T-cell (primary cell): ENCODE measurements at regions of chr6 and their contacts with region 1.

Region 1: DNA sequence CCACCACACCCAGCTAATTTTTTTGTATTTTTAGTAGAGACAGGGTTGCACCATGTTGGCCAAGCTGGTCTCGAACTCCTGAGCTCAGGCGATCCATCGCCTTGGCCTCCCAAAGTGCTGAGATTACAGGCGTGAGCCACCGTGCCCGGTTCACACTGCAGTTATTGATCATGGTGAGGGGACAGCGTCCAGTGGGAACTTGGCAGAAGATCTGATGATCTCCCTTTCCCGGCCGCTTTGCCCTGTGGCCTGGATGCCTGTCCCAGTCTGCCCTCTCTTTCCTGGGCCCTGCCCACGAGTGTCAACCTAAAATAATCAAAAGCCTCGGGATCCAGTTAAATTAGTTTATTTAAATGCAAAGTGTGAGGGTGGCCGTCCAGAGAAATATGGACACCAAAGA is 42.2 kb downstream of the CPNE5 start:
- DNase-seq: no peak
- ATAC-seq: no peak
- H3K4me3 ChIP-seq: no peak overlapping the region
- H3K4me3 Mint-ChIP-seq: no peak overlapping the region
- H3K27ac ChIP-seq: no peak overlapping the region
- H3K27ac Mint-ChIP-seq: no peak overlapping the region
- H3K4me1 ChIP-seq: no peaks in the 10 kb centered on the region
- H3K4me1 Mint-ChIP-seq: no peaks in the 10 kb centered on the region
- H3K27me3 ChIP-seq: peaks cover 0 to 28% of the 10 kb centered on the region in 2 experiments
- H3K27me3 Mint-ChIP-seq: peaks cover 6 to 11% of the 10 kb centered on the region in 2 donors

Region 2: DNA sequence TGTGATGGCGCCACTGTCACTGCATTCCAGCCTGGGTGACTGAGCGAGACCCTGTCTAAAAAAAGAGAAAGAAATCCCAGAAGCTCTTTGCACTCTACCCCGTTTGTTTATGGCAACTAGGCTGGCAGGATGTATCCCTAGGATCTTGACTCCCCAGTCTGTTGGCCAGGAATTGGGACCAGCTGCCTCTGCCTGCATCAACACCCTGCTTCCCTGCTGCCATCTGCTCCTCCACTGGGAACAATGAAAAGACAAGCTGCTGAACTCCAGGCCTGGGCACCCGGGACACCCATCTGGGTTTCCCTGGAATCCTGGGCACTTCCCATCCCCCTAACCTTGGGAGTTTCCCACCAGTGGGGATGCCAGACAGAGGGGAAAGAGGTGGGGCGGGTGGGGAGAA is 22.7 kb before region 1 on chr6:
- CTCF ChIA-PET with region 1: no interaction called
- POLR2A ChIA-PET with region 1: no interaction called
- DNase-seq: no peak
- ATAC-seq: no peak
- H3K4me3 ChIP-seq: no peak overlapping the region
- H3K4me3 Mint-ChIP-seq: no peak overlapping the region
- H3K27ac ChIP-seq: no peak overlapping the region
- H3K27ac Mint-ChIP-seq: no peak overlapping the region
- H3K4me1 ChIP-seq: peaks cover 11 to 29% of the 10 kb centered on the region in 2 experiments
- H3K4me1 Mint-ChIP-seq: peaks cover 26 to 30% (median 29%) of the 10 kb centered on the region in 3 donors
- H3K27me3 ChIP-seq: peaks cover 0 to 7% of the 10 kb centered on the region in 2 experiments
- H3K27me3 Mint-ChIP-seq: no peaks in the 10 kb centered on the region

Region 3: GRCh38 chr6:36858407-36858981 is 61.4 kb after region 1 on chr6:
- CTCF ChIA-PET with region 1: no interaction called
- POLR2A ChIA-PET with region 1: interaction called in 1 of 2 experiments, 10 read pairs
- DNase-seq: no peak
- ATAC-seq: no peak
- H3K4me3 ChIP-seq: no peak overlapping the region
- H3K4me3 Mint-ChIP-seq: no peak overlapping the region
- H3K27ac ChIP-seq: no peak overlapping the region
- H3K27ac Mint-ChIP-seq: no peak overlapping the region
- H3K4me1 ChIP-seq: no peaks in the 10 kb centered on the region
- H3K4me1 Mint-ChIP-seq: peaks cover 1 to 7% (median 5%) of the 10 kb centered on the region in 3 donors
- H3K27me3 ChIP-seq: no peaks in the 10 kb centered on the region
- H3K27me3 Mint-ChIP-seq: no peaks in the 10 kb centered on the region